Panc1 (cell line): ENCODE measurements at regions of chr6 and their contacts with region 1.

Region 1: DNA sequence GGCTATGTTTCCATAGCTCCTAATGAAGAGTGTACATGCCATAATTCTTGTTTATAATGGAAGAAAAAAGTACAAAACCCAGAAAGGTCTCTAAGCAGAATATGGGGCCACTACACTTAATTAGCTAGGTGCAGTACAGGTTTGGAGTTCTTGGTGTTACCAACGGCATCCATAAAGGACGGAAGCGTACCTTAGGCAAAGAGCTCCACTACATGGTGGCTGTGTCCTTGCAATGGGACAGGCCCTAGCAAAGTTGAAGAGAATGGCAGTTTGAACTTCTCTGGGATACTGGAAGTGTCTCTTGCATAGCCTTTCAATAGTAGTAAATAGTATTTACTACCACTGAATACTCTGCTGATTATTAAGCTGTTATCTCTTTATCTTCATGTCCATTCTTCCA is 371.7 kb upstream of the MMS22L start:
- DNase-seq: no peak
- ATAC-seq: no peak
- H3K4me3 ChIP-seq: no peak overlapping the region
- H3K27ac ChIP-seq: no peak overlapping the region
- H3K4me1 ChIP-seq: no peaks in the 10 kb centered on the region
- H3K27me3 ChIP-seq: no peaks in the 10 kb centered on the region
- CTCF ChIP-seq: no peak

Region 2: DNA sequence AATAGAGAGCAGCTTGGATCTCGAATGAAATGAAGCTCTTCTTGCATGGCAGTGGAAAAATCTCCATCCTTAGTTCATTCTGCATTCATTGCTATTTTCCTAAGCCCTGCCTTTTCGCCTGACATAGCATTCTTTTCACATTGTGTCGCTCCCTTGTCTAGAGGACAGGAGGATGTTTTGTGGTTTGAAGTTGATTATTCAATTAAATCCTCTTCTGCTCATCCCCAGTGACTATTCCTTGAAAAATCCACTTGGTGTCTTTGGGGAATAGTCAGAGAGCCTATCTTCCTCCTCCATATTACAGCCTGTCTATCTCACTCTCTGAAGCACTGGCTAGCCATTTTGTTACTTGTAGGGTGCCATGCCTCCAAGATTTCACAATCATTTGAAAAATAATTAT is 568.9 kb before region 1 on chr6:
- CTCF ChIA-PET with region 1: no interaction called
- POLR2A ChIA-PET with region 1: no interaction called
- in situ Hi-C with region 1: no loop called
- intact Hi-C with region 1: no loop called
- DNase-seq: no peak
- ATAC-seq: no peak
- H3K4me3 ChIP-seq: no peak overlapping the region
- H3K27ac ChIP-seq: no peak overlapping the region
- H3K4me1 ChIP-seq: no peaks in the 10 kb centered on the region
- H3K27me3 ChIP-seq: no peaks in the 10 kb centered on the region; the same call in 1 of the 2 replicates
- CTCF ChIP-seq: no peak

Region 3: DNA sequence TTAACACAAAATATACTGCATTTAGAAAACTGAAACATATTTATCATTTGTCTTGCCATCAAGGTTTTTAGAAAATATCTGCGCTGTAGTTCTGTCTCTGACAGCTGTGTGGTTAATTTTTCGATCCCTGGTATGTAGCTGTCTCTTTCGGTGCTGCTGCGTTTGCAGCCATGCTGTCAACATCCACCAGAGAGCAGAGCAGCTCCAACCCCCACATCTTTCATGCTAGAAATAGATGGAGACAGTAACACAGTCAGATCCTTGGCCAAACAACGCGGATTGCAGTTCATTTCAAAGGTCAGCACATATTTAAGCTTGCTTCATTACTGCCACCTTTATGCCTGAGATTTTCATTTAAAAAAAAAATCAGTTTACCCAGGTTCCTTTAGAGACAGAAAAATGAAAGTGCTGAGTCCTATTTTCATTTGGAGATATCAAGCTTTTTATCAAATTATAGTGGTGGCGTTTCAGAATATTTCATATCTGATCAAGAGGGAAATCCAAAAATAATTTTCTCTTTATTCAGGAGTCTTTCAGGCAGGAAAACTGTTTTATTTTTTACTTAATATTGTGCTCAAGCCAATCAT is 214.0 kb before region 1 on chr6:
- CTCF ChIA-PET with region 1: no interaction called
- POLR2A ChIA-PET with region 1: no interaction called
- in situ Hi-C with region 1: no loop called
- intact Hi-C with region 1: no loop called
- DNase-seq: peak; percentile 12
- ATAC-seq: peak; percentile 91
- H3K4me3 ChIP-seq: no peak overlapping the region
- H3K27ac ChIP-seq: no peak overlapping the region
- H3K4me1 ChIP-seq: no peaks in the 10 kb centered on the region
- H3K27me3 ChIP-seq: no peaks in the 10 kb centered on the region
- CTCF ChIP-seq: peak; percentile 79

Region 4: DNA sequence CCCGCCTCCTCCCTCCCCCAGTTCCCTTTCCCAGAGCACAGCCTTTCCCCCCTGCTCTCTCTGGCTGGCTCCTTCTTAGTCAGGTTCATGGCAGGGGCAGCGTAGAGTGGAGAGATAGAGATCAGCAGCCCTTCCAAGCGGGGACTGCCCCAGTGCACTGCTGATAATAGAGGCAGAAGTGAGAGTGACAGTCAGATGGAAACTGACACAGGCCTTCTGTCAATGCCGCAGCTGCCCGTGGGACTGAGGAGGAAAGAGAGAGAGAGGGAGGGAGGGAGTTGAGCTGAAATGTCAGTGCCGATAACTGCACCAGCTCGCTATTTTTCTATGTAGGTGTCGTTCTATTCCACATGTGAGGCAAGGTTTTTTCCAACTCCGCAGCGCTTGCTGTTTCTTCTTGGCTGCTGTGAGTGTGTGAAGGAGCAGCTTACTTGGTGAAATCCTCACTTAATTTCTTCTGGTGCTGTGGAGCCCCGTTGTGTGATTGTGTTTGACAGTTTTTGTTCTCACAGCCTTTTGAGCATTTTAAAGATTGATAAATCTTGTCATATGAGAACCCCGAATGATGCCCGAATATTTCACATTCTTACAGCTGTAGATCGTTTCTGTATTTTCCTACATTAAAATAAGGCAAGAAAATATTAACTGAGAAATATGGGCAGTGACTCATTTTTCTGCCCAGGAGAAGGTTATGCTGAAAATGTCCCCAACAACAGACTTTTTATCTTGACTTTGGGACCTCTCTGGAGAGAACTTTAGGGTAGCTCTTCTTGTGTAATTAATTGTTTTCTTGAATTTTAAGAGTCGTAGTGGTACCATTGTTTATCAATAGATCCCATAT is 14.7 kb after region 1 on chr6:
- CTCF ChIA-PET with region 1: no interaction called
- POLR2A ChIA-PET with region 1: interaction called, 10 read pairs
- in situ Hi-C with region 1: no loop called
- intact Hi-C with region 1: no loop called
- DNase-seq: no peak
- ATAC-seq: peak; percentile 65
- H3K4me3 ChIP-seq: peak overlapping the region; percentile 19 to 41; a peak in 3 of 4 replicates
- H3K27ac ChIP-seq: no peak overlapping the region
- H3K4me1 ChIP-seq: no peaks in the 10 kb centered on the region; the same call in 1 of the 2 replicates
- H3K27me3 ChIP-seq: no peaks in the 10 kb centered on the region
- CTCF ChIP-seq: no peak